ENCODE measurements at regions of chr12 and their contacts with region 1.

Region 1: DNA sequence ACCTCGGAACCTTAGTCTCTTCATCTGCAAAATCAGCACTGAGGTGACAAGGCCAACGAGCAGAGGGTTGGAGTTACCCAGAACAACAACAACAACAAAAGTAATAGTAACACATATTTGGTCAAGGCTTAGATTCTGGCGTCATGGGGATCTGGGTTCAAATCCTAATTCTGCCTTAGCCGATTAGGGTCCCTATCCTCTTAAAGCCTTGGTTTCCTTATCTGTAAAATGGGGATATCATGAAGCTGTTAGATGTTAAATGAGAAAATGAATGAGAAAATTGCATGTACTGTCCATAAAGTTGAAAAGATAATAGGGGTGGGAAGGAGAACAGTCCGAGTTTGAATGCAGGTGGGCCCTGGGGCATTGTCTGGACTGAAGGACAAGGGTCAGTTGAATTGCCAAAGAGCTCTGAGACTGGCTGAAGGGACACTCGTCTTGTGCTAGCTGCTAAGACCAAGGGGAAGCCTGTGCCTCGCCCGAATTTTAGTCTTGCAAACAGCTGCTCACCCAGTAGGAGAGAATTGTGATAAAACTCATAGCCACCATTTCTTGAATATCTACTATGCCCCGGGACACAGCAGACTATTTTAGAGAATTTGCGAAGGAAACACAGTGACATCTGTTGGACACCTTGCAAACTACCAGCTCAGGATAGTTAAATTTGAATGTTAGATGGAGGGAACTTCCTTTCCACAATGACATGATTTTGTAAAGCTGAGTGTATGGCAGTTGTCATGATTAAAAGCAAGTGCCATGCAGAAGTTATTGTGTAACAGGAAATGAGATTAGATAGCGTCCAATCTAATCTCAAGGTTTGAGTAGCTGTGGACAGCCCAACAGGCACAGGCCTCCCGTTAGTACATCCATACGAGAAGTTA is 6.8 kb upstream of the HNF1A start:
- H3K4me3 ChIP-seq: no peak overlapping the region
- H3K27ac ChIP-seq: no peak overlapping the region
- H3K4me1 ChIP-seq: no peaks in the 10 kb centered on the region
- CTCF ChIP-seq: no peak

Region 2: DNA sequence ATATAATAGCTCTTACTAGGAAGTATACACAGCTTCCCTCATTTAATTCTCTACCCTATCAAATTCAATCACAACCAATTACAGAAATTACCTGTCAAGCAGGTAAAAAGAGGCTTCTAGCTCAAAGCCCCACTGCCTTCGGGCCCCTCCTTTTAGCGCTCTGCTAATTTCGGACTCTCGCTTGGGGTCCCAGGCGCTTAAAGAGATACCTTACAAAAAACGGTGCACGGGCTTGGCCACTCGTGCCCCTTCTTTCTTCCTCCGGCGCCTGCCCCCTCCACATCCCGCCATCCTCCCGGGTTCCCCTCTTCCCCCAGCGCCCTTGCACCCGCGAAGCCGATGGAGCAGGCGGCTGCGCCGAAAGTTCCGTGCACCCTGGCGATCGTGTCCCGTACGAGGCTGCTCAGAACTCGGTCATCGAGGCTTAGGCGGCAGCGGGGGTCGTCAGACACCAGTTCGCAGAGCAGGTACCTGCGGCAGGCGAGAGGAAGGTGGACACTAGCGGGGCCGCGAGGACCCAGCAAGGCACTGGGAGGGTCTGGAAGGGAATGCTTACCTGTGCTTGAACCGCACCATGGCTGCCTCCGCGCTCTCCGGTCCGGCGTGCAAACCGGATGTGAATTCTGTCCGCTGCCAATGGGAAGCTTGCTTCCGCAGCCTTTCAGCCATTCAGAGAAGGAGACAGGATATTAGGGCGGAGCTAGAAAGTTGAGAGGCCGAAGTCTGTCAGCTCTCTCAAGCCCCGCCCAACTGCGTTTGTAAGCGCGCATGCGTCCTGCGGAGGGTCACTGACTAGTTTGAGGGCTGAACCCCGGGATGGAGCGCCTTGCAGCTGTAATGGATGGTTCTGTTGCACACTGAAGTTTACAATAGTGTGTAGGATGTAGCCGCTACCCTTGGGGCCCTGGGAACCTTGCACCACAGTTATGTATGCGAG is 390.5 kb before region 1 on chr12 and contains the start of gene POP5:
- CTCF ChIA-PET with region 1: interaction called, 32 read pairs
- POLR2A ChIA-PET with region 1: interaction called, 8 read pairs
- H3K4me3 ChIP-seq: peak within 1 kb of the TSS; percentile 83
- H3K27ac ChIP-seq: peak within 1 kb of the TSS; percentile 60; the same call in 1 of the 2 replicates
- H3K4me1 ChIP-seq: no peaks in the 10 kb centered on the region
- CTCF ChIP-seq: no peak

Region 3: DNA sequence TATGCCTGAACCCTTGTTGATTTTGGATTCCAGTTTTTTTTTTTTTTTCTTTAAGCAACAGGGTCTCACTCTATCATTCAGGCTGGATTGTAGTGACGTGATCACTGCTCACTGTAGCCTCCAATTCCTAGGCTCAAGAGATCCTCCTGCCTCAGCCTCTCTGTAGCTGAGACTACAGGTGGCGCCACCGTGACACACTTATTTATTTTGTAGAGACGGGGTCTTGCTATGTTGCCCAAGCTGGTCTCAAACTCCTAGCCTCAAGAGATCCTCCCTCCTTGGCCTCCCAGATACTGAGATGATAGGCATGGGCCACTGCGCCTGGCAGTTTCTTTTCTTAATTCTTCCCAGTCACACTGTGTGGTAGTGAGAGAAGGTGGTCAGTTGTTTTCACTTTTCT is 220.7 kb before region 1 on chr12:
- CTCF ChIA-PET with region 1: interaction called, 16 read pairs
- POLR2A ChIA-PET with region 1: no interaction called
- H3K4me3 ChIP-seq: no peak overlapping the region
- H3K27ac ChIP-seq: no peak overlapping the region
- H3K4me1 ChIP-seq: no peaks in the 10 kb centered on the region
- CTCF ChIP-seq: no peak

Region 4: DNA sequence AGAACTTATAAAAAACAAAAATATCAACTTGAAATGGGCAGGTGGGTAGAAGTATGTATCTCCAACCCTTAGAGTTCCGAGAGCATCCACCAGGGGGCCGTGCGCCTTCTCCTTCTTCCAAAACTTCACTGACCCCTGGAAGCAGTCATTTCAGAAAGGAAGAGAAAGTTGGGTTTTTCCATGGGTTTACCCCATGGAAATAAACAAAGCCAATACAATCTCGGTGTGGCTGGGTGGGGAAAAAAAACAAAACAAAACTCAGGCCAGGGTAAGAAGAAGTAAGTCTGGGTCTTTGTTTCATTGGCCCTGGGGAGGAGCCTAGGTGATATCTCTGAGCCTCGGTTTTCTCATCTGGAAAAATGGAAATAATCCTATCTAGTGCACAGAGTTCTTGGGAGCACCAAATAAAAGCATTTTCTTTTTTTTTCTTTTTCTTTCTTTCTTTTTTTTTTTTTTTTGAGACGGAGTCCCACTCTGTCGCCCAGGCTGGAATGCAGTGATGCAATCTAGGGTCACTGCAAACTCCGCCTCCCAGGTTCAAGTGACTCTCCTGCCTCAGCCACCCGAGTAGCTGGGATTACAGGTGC is 26.8 kb before region 1 on chr12:
- CTCF ChIA-PET with region 1: interaction called, 14 read pairs
- POLR2A ChIA-PET with region 1: interaction called, 4 read pairs
- H3K4me3 ChIP-seq: no peak overlapping the region
- H3K27ac ChIP-seq: no peak overlapping the region
- H3K4me1 ChIP-seq: no peaks in the 10 kb centered on the region
- CTCF ChIP-seq: 0 out of 2 replicates have a peak, but pooled peaks have one; percentile 48

Region 5: GRCh38 chr12:121005346-121005815 is 33.8 kb after region 1 on chr12:
- CTCF ChIA-PET with region 1: interaction called, 11 read pairs
- POLR2A ChIA-PET with region 1: no interaction called
- H3K4me3 ChIP-seq: no peak overlapping the region
- H3K27ac ChIP-seq: no peak overlapping the region
- H3K4me1 ChIP-seq: no peaks in the 10 kb centered on the region
- CTCF ChIP-seq: 0 out of 2 replicates have a peak, but pooled peaks have one; percentile 45